Transverse colon (tissue), 4 donors: ENCODE measurements at regions of chr9 and their contacts with region 1.

Region 1: GRCh38 chr9:8456344-8456743 is 656.8 kb upstream of the DMAC1 start:
- DNase-seq: no peak
- H3K4me3 ChIP-seq: no peak overlapping the region
- H3K27ac ChIP-seq: no peak overlapping the region
- H3K4me1 ChIP-seq: no peaks in the 10 kb centered on the region
- H3K27me3 ChIP-seq: no peaks in the 10 kb centered on the region
- CTCF ChIP-seq: no peak
- EP300 ChIP-seq: no peak
- POLR2A ChIP-seq: no peak

Region 2: GRCh38 chr9:8221462-8221861 is 234.9 kb before region 1 on chr9:
- in situ Hi-C with region 1: no loop called
- intact Hi-C with region 1: no loop called
- DNase-seq: no peak
- H3K4me3 ChIP-seq: no peak overlapping the region
- H3K27ac ChIP-seq: no peak overlapping the region
- H3K4me1 ChIP-seq: no peaks in the 10 kb centered on the region
- H3K27me3 ChIP-seq: no peaks in the 10 kb centered on the region
- CTCF ChIP-seq: no peak
- EP300 ChIP-seq: no peak
- POLR2A ChIP-seq: no peak

Region 3: DNA sequence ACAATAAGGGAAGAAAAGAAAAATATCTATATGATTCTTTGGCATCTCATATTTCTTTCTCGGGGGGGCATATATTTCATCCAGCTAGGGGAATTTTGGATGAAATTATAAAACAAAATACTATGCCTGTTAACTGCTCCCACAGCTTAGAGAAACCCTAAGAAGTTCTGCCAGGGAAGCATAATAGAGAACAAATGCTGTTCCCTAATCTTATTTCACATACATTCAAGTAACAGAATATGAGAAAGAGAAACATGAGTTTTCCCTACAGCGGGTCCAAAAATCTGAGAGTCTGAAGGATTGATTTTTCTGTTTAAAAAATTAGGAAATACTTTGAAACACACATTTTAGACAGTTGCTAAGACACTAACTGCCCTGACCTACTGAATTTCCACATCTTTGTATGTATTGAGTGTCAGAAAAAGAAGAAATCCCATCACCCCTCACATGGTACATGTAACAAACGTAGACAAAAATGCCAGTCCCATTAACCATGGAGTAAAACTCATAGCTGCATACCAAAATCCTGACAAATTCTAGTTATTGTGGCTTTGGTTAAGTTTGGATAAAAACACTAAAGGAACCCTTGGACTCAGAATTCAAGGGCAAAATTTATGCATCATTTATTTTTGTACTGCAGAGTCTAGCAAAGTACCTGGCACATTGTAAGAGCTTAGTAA is 36.6 kb before region 1 on chr9:
- in situ Hi-C with region 1: no loop called
- intact Hi-C with region 1: no loop called
- DNase-seq: no peak
- H3K4me3 ChIP-seq: no peak overlapping the region
- H3K27ac ChIP-seq: no peak overlapping the region
- H3K4me1 ChIP-seq: no peaks in the 10 kb centered on the region
- H3K27me3 ChIP-seq: no peaks in the 10 kb centered on the region
- CTCF ChIP-seq: no peak
- EP300 ChIP-seq: no peak
- POLR2A ChIP-seq: no peak

Region 4: GRCh38 chr9:8558176-8558575 is 101.8 kb after region 1 on chr9:
- in situ Hi-C with region 1: loop called in 1 of 4 experiments (anchors 25 kb)
- intact Hi-C with region 1: no loop called
- DNase-seq: no peak
- H3K4me3 ChIP-seq: no peak overlapping the region
- H3K27ac ChIP-seq: no peak overlapping the region
- H3K4me1 ChIP-seq: no peaks in the 10 kb centered on the region
- H3K27me3 ChIP-seq: no peaks in the 10 kb centered on the region
- CTCF ChIP-seq: no peak
- EP300 ChIP-seq: no peak
- POLR2A ChIP-seq: no peak